T-cell (primary cell): ENCODE measurements at regions of chr17 and their contacts with region 1.

Region 1: DNA sequence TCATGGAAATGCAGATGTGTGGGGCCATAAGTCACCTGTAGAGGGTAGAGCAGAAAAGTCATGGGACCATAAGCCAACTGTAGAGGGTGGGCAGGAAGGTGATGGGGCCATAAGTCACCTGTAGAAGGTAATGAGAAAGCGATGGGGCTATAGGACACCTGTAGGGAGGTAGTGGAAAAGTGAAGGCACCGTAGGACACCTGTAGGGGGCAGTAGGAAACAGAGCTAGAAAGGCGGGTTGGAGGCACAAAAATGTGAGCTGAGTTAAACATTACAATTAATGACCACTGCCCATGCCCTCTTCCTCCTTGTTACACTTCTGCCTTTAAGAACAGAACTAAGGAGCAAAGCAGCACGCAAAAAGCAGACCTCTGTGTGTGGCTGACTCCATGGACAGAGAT is 150.1 kb downstream of the SHISA6 start:
- DNase-seq: no peak
- ATAC-seq: no peak
- H3K4me3 ChIP-seq: no peak overlapping the region
- H3K4me3 Mint-ChIP-seq: no peak overlapping the region
- H3K27ac ChIP-seq: no peak overlapping the region
- H3K27ac Mint-ChIP-seq: no peak overlapping the region
- H3K4me1 ChIP-seq: no peaks in the 10 kb centered on the region
- H3K4me1 Mint-ChIP-seq: no peaks in the 10 kb centered on the region
- H3K27me3 ChIP-seq: no peaks in the 10 kb centered on the region
- H3K27me3 Mint-ChIP-seq: no peaks in the 10 kb centered on the region

Region 2: DNA sequence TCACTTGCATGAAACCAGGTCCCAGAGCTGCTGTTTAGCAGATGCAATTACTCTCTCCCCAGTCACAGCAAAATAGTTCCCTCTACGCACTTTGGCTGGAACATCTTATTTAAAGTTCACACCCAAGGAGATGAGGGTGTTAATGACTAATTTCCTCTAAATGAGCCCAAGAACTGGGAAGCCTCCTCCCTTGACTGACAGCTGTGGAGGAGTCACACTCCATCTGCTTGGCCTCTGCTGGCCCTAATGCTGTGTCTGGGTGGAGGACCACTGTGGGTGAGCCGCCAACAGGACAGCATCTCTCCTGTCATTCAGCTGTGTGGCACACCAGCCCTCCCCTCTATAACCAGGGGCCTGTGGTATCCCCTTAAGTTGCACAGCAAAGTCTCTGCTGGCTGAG is 34.8 kb before region 1 on chr17:
- CTCF ChIA-PET with region 1: interaction called in 1 of 2 experiments, 3 read pairs
- POLR2A ChIA-PET with region 1: interaction called in 1 of 2 experiments, 11 read pairs
- DNase-seq: no peak
- ATAC-seq: no peak
- H3K4me3 ChIP-seq: no peak overlapping the region
- H3K4me3 Mint-ChIP-seq: no peak overlapping the region
- H3K27ac ChIP-seq: no peak overlapping the region
- H3K27ac Mint-ChIP-seq: no peak overlapping the region
- H3K4me1 ChIP-seq: no peaks in the 10 kb centered on the region
- H3K4me1 Mint-ChIP-seq: no peaks in the 10 kb centered on the region
- H3K27me3 ChIP-seq: no peaks in the 10 kb centered on the region
- H3K27me3 Mint-ChIP-seq: no peaks in the 10 kb centered on the region

Region 3: DNA sequence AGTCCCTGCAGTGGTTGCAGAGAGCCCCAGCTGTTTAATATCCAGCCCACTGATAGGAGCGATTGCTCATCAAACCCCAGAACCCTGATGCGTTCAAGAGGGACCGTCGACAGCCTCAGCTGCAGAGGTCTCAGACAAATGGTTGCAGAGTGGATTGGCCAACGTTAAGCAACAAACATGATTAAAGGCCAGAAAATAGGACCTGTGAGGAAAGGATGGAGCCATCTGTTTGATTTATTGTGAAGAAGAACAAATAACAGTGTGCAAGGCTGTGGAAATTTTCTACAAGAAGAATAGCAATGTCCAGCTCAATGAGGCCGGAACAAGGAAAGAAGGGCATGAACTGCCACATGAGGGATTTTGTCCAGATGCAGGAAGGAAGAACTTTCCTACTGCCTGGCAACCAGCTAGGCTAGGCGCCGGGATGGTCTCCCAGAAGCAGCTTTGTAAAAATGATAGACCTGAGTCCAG is 68.8 kb after region 1 on chr17:
- CTCF ChIA-PET with region 1: no interaction called
- POLR2A ChIA-PET with region 1: no interaction called
- DNase-seq: no peak
- ATAC-seq: no peak
- H3K4me3 ChIP-seq: no peak overlapping the region
- H3K4me3 Mint-ChIP-seq: no peak overlapping the region
- H3K27ac ChIP-seq: no peak overlapping the region
- H3K27ac Mint-ChIP-seq: no peak overlapping the region
- H3K4me1 ChIP-seq: no peaks in the 10 kb centered on the region
- H3K4me1 Mint-ChIP-seq: no peaks in the 10 kb centered on the region
- H3K27me3 ChIP-seq: no peaks in the 10 kb centered on the region
- H3K27me3 Mint-ChIP-seq: no peaks in the 10 kb centered on the region

Region 4: GRCh38 chr17:11506642-11507041 is 115.5 kb after region 1 on chr17:
- CTCF ChIA-PET with region 1: no interaction called
- POLR2A ChIA-PET with region 1: no interaction called
- DNase-seq: no peak
- ATAC-seq: no peak
- H3K4me3 ChIP-seq: no peak overlapping the region
- H3K4me3 Mint-ChIP-seq: no peak overlapping the region
- H3K27ac ChIP-seq: no peak overlapping the region
- H3K27ac Mint-ChIP-seq: no peak overlapping the region
- H3K4me1 ChIP-seq: no peaks in the 10 kb centered on the region
- H3K4me1 Mint-ChIP-seq: no peaks in the 10 kb centered on the region
- H3K27me3 ChIP-seq: no peaks in the 10 kb centered on the region
- H3K27me3 Mint-ChIP-seq: no peaks in the 10 kb centered on the region